B cell (primary cell): ENCODE measurements at regions of chr7 and their contacts with region 1.

Region 1: GRCh38 chr7:106056513-106057203 is 55.5 kb downstream of the SYPL1 start:
- DNase-seq: peak; percentile 87
- ATAC-seq: peak; percentile 46
- H3K4me3 ChIP-seq: no peak overlapping the region
- H3K4me3 Mint-ChIP-seq: peak overlapping the region; percentile 73
- H3K27ac ChIP-seq: peak overlapping the region; percentile 89 to 94
- H3K27ac Mint-ChIP-seq: peak overlapping the region; percentile 96
- H3K4me1 ChIP-seq: peaks cover 51 to 58% of the 10 kb centered on the region in 2 donors
- H3K4me1 Mint-ChIP-seq: peaks cover 60% of the 10 kb centered on the region
- H3K27me3 ChIP-seq: no peaks in the 10 kb centered on the region
- H3K27me3 Mint-ChIP-seq: no peaks in the 10 kb centered on the region
- CTCF ChIP-seq: peak; percentile 81

Region 2: GRCh38 chr7:105958012-105958411 is 98.6 kb before region 1 on chr7:
- CTCF ChIA-PET with region 1: no interaction called
- POLR2A ChIA-PET with region 1: no interaction called
- intact Hi-C with region 1: no loop called
- DNase-seq: no peak
- ATAC-seq: no peak
- H3K4me3 ChIP-seq: no peak overlapping the region
- H3K4me3 Mint-ChIP-seq: no peak overlapping the region
- H3K27ac ChIP-seq: no peak overlapping the region
- H3K27ac Mint-ChIP-seq: no peak overlapping the region
- H3K4me1 ChIP-seq: no peaks in the 10 kb centered on the region
- H3K4me1 Mint-ChIP-seq: no peaks in the 10 kb centered on the region
- H3K27me3 ChIP-seq: no peaks in the 10 kb centered on the region
- H3K27me3 Mint-ChIP-seq: no peaks in the 10 kb centered on the region
- CTCF ChIP-seq: no peak

Region 3: GRCh38 chr7:106041140-106041717 is 15.4 kb before region 1 on chr7:
- CTCF ChIA-PET with region 1: interaction called, 32 read pairs
- POLR2A ChIA-PET with region 1: no interaction called
- intact Hi-C with region 1: no loop called
- DNase-seq: peak; percentile 62
- ATAC-seq: peak; percentile 61
- H3K4me3 ChIP-seq: no peak overlapping the region
- H3K4me3 Mint-ChIP-seq: no peak overlapping the region
- H3K27ac ChIP-seq: no peak overlapping the region
- H3K27ac Mint-ChIP-seq: peak overlapping the region; percentile 5
- H3K4me1 ChIP-seq: peaks cover 14 to 23% of the 10 kb centered on the region in 2 donors
- H3K4me1 Mint-ChIP-seq: peaks cover 13% of the 10 kb centered on the region
- H3K27me3 ChIP-seq: peaks cover 0 to 9% (median 2%) of the 10 kb centered on the region in 4 experiments
- H3K27me3 Mint-ChIP-seq: no peaks in the 10 kb centered on the region
- CTCF ChIP-seq: peak; percentile 90

Region 4: GRCh38 chr7:106080300-106080987 is 23.8 kb after region 1 on chr7:
- CTCF ChIA-PET with region 1: interaction called, 147 read pairs
- POLR2A ChIA-PET with region 1: interaction called, 5 read pairs
- intact Hi-C with region 1: no loop called
- DNase-seq: no peak
- ATAC-seq: no peak
- H3K4me3 ChIP-seq: no peak overlapping the region
- H3K4me3 Mint-ChIP-seq: peak overlapping the region; percentile 38
- H3K27ac ChIP-seq: peak overlapping the region in 1 of 2 donors; percentile 7
- H3K27ac Mint-ChIP-seq: peak overlapping the region; percentile 84
- H3K4me1 ChIP-seq: peaks cover 72 to 84% of the 10 kb centered on the region in 2 donors
- H3K4me1 Mint-ChIP-seq: peaks cover 77% of the 10 kb centered on the region
- H3K27me3 ChIP-seq: no peaks in the 10 kb centered on the region
- H3K27me3 Mint-ChIP-seq: no peaks in the 10 kb centered on the region
- CTCF ChIP-seq: no peak

Region 5: DNA sequence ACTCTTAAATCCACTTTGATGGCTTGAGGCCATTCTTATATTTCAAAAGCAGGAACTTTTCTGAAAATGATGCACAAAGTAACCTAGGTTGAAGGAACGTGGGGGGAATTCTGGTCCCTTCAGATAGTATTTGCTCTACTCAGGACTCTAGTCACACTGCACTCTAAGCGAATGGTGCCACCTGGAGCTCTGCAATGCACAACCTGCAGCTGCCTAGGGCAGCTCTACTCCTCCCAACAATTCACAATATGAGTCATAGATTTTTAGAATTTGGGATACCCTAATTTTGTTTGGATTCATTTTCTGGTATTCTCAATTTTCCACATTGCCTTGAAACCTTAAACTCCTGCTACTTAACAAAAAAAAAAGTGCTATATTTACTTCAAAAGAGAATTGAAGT is 38.1 kb after region 1 on chr7:
- CTCF ChIA-PET with region 1: interaction called, 185 read pairs
- POLR2A ChIA-PET with region 1: interaction called, 21 read pairs
- intact Hi-C with region 1: loop called (anchors 1 kb)
- DNase-seq: peak; percentile 51
- ATAC-seq: peak; percentile 60
- H3K4me3 ChIP-seq: no peak overlapping the region
- H3K4me3 Mint-ChIP-seq: no peak overlapping the region
- H3K27ac ChIP-seq: peak overlapping the region in 1 of 2 donors; percentile 77
- H3K27ac Mint-ChIP-seq: peak overlapping the region; percentile 54
- H3K4me1 ChIP-seq: peaks cover 32 to 61% of the 10 kb centered on the region in 2 donors
- H3K4me1 Mint-ChIP-seq: peaks cover 67% of the 10 kb centered on the region
- H3K27me3 ChIP-seq: no peaks in the 10 kb centered on the region
- H3K27me3 Mint-ChIP-seq: no peaks in the 10 kb centered on the region
- CTCF ChIP-seq: peak; percentile 24

Region 6: DNA sequence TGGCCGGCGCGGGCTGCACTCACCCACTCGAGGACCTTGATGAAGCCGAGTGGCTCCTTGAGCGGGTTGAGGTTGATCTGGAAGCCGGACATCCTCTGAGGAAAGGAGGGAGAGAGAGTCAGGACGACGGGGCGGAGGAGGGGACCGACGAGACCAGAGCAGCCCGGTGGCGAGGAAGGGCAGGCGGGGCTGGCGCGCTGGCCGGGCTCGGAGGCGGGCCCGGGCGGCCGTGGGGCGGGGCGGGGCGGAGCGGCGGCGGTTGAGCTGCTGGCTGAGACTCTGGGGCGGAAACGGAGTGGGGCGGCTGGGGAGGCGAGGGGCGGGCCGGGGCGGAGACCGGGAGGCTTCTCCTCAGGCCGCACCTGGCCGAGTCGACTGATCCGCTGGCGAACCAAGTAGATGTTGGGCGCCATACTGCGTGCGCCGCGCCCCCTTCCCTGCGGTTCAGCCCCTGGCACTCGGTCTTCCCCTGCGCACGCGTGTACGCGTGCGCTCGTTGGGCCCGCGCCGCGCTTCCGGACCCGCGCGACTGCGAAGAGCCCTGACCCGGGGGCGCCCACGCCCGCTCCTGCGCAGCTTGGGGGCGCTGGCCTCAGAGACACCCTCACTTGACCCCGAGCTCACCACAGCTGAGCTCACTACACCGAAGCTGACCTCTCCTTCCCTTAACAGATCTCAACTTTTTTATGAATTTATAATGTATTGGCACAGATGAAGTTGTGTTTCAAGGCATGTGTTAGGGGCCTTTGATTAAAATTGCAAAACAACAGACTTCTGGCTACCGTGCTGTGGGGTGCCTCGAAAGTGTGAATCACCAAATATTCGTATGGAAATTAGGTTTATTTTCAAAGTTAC is 55.7 kb after region 1 on chr7 and contains the start of gene SYPL1:
- CTCF ChIA-PET with region 1: interaction called, 63 read pairs
- POLR2A ChIA-PET with region 1: interaction called, 37 read pairs
- intact Hi-C with region 1: loop called (anchors 1 kb)
- DNase-seq: peak; percentile 97
- ATAC-seq: peak; percentile 79
- H3K4me3 ChIP-seq: peak within 1 kb of the TSS; percentile 80 to 94 (median 81)
- H3K4me3 Mint-ChIP-seq: peak within 1 kb of the TSS; percentile 95
- H3K27ac ChIP-seq: peak within 1 kb of the TSS; percentile 91 to 95
- H3K27ac Mint-ChIP-seq: peak within 1 kb of the TSS; percentile 96
- H3K4me1 ChIP-seq: peaks cover 66 to 70% of the 10 kb centered on the region in 2 donors
- H3K4me1 Mint-ChIP-seq: peaks cover 74% of the 10 kb centered on the region
- H3K27me3 ChIP-seq: no peaks in the 10 kb centered on the region
- H3K27me3 Mint-ChIP-seq: no peaks in the 10 kb centered on the region
- CTCF ChIP-seq: no peak
- total RNA-seq, gene SYPL1: 126 and 130 TPM in 2 replicates

Region 7: GRCh38 chr7:106126170-106126938 is 69.7 kb after region 1 on chr7:
- CTCF ChIA-PET with region 1: interaction called, 13 read pairs
- POLR2A ChIA-PET with region 1: no interaction called
- intact Hi-C with region 1: no loop called
- DNase-seq: peak; percentile 58
- ATAC-seq: peak; percentile 28
- H3K4me3 ChIP-seq: no peak overlapping the region
- H3K4me3 Mint-ChIP-seq: no peak overlapping the region
- H3K27ac ChIP-seq: no peak overlapping the region
- H3K27ac Mint-ChIP-seq: no peak overlapping the region
- H3K4me1 ChIP-seq: peaks cover 7 to 9% of the 10 kb centered on the region in 2 donors
- H3K4me1 Mint-ChIP-seq: peaks cover 18% of the 10 kb centered on the region
- H3K27me3 ChIP-seq: no peaks in the 10 kb centered on the region
- H3K27me3 Mint-ChIP-seq: no peaks in the 10 kb centered on the region
- CTCF ChIP-seq: no peak

Region 8: DNA sequence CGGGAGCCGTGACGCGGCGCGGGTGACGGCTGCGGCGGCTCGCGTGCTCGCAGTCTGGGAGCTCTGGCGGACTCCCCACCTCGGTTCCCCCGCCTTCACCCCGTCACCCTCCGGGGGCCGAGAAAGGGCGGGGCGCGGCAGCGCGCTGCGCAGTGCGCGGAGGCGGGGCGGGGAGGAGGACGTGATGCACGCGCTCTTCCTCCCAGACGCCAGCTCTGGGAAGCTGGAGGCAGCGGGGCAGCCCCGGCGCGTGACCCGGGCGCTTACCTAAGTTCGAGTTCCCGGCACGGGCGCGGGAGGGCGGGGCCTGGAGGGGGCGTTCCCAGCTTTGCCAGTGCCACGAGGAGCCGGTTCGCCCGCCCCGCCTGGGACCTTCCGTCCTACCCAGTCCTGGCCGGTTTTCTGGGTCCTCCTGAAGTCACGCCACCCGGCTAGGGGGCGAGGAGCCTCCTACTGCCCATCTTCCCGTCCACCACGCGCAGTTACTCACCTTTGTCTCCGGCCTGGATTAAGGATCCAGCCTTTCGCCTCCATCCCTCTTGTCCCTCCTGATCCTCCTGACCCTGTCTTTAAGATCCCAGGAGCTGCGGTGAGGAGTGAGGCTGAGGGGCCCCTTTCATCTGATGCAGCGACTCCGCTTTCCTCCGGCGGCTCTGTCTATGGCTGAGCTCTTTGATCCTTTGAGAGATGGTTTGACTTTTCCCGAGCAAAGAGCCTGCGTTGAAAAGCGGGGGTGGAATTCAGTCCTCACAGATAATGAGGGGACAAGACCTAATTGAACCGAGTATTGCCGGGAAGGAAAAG is 228.6 kb after region 1 on chr7:
- CTCF ChIA-PET with region 1: no interaction called
- POLR2A ChIA-PET with region 1: interaction called, 6 read pairs
- intact Hi-C with region 1: loop called (anchors 5 kb)
- DNase-seq: peak; percentile 100
- ATAC-seq: peak; percentile 87
- H3K4me3 ChIP-seq: peak overlapping the region; percentile 79 to 100 (median 89)
- H3K4me3 Mint-ChIP-seq: peak overlapping the region; percentile 97
- H3K27ac ChIP-seq: peak overlapping the region; percentile 84 to 87
- H3K27ac Mint-ChIP-seq: peak overlapping the region; percentile 98
- H3K4me1 ChIP-seq: peaks cover 10 to 20% of the 10 kb centered on the region in 2 donors
- H3K4me1 Mint-ChIP-seq: peaks cover 31% of the 10 kb centered on the region
- H3K27me3 ChIP-seq: no peaks in the 10 kb centered on the region
- H3K27me3 Mint-ChIP-seq: no peaks in the 10 kb centered on the region
- CTCF ChIP-seq: no peak